Activated CD4-positive, alpha-beta T cell treated with anti-CD3 and anti-CD28 coated beads for 36 hours (primary cell): ENCODE measurements at regions of chr20 and their contacts with region 1.

Region 1: GRCh38 chr20:38033310-38034107 is at the starts of genes RPRD1B and TTI1:
- DNase-seq: peak; percentile 93
- ATAC-seq: peak; percentile 85
- H3K4me3 Mint-ChIP-seq: peak within 1 kb of the TSS; percentile 94
- H3K27ac Mint-ChIP-seq: peak within 1 kb of the TSS; percentile 98
- H3K4me1 Mint-ChIP-seq: peaks cover 65% of the 10 kb centered on the region
- H3K27me3 Mint-ChIP-seq: no peaks in the 10 kb centered on the region
- total RNA-seq, gene RPRD1B: 29.9 to 36.4 TPM
- total RNA-seq, gene TTI1: 35.6 to 36.7 TPM

Region 2: DNA sequence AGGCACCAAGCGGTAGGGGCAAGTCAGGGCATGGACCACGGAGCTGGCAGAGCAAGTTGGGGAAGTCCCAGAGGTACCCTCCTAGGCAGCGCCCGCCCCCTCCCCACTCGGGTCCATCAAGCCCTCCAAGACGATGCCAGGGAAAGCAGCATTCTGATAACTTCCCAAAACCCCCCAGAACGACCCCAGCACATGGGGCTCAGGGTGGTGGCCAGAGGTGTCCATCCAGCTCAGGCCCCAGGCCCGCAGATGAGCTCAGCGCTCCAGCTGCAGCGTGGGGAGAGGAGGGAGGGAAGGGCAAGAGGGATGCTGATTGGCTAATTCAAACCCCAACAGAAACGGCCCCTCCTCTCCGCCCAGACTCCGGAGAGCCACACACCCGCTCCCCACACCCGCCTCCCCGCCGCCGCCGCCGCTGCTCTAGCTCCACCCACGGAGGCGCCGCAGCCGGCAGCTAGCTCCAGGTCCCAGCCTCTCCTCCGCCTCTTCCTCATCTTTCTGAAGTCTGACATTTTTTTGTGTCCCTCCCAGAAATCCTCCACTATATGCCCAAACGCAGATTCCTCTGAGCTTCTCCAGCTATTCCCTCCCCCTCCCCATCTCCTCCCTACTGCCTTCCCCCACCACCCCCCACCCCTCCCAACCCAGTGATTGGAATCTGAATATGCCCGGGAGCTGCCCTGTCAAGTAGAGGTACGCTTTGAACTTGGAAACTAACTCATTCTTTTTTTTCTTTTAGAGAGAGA is 1197.9 kb before region 1 on chr20:
- CTCF ChIA-PET with region 1: no interaction called
- POLR2A ChIA-PET with region 1: no interaction called
- intact Hi-C with region 1: loop called in 1 of 2 experiments (anchors 10 kb)
- DNase-seq: peak; percentile 94
- ATAC-seq: peak; percentile 98
- H3K4me3 Mint-ChIP-seq: peak overlapping the region; percentile 76
- H3K27ac Mint-ChIP-seq: peak overlapping the region; percentile 85
- H3K4me1 Mint-ChIP-seq: peaks cover 13% of the 10 kb centered on the region
- H3K27me3 Mint-ChIP-seq: no peaks in the 10 kb centered on the region

Region 3: GRCh38 chr20:37294262-37294981 is 739.1 kb before region 1 on chr20:
- CTCF ChIA-PET with region 1: no interaction called
- POLR2A ChIA-PET with region 1: no interaction called
- intact Hi-C with region 1: loop called in 1 of 2 experiments (anchors 1 kb)
- DNase-seq: no peak
- ATAC-seq: no peak
- H3K4me3 Mint-ChIP-seq: no peak overlapping the region
- H3K27ac Mint-ChIP-seq: no peak overlapping the region
- H3K4me1 Mint-ChIP-seq: peaks cover 54% of the 10 kb centered on the region
- H3K27me3 Mint-ChIP-seq: no peaks in the 10 kb centered on the region

Region 4: DNA sequence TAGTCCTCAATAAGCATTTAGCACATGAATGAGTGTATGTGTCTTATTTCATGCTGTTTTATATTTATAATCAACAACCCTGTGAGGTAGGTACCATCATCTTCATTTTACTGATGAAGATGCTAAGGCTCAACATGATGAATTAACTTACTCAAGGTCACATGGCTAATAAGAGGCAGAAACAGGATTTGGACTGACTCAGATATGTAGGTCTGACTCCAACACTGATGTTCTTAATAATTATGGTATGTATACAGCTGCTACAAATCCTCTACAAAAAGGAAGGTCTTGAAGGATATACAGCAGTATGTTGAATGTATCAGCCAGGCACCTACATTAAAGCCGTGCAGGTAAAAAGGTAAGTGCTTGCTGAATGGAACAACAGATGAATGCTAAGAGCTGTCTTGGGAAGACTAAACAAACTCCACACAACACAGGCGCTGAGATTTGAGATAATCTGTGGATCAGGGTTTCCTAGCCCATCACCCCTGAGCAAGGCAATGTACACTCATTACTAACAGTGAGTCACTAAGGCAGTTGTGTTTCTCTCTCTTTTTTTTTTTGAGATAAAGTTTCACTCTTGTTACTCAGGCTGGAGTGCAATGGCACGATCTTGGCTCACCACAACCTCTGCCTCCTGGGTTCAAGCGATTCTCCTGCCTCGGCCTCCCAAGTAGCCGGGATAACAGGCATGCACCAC is 32.2 kb before region 1 on chr20:
- CTCF ChIA-PET with region 1: interaction called, 3 read pairs
- POLR2A ChIA-PET with region 1: interaction called, 3 read pairs
- intact Hi-C with region 1: loop called in 1 of 2 experiments (anchors 1 kb)
- DNase-seq: peak; percentile 46
- ATAC-seq: peak; percentile 87
- H3K4me3 Mint-ChIP-seq: no peak overlapping the region
- H3K27ac Mint-ChIP-seq: peak overlapping the region; percentile 41
- H3K4me1 Mint-ChIP-seq: peaks cover 43% of the 10 kb centered on the region
- H3K27me3 Mint-ChIP-seq: no peaks in the 10 kb centered on the region

Region 5: DNA sequence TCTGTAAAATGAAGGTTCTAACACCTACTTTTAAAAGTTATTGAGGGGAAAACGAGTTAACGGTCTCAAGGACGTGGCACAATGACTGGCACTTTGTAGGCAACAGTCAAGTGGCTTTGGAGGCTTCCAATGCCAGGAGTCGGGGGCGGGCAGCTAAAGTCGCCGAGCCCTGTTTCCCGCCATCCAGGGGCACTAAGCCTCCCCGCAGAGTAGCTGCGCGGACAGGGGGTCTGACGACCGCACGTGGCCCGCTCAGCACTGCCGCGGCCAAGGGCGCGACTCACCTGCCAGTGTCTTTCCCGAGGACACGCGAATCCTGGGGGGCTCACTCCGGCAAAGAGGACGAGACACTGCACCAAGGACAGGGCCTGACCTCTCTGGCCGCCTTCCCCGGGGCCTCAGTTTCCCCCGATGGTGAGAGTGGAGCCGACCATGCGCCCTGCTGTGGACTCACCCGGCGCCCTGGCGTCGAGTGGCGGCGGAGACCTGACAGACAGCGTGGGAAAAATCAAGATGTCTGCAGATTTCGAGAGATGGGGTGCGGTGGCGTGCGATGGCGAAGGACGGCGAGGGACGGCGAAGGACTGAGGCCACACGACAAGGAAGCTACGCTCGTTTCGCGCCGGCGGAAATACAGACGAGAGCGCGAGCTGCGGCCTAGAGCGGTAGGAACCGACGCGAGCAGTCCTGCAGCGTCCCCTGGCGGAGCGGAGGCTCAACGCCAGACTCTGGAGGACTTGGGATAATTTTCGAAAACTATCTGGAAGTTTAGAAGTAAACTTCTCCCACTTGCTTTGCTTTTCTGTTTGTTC is 401.4 kb after region 1 on chr20 and contains the start of gene SNHG17:
- CTCF ChIA-PET with region 1: no interaction called
- POLR2A ChIA-PET with region 1: no interaction called
- intact Hi-C with region 1: loop called in 1 of 2 experiments (anchors 1 kb)
- DNase-seq: peak; percentile 94
- ATAC-seq: peak; percentile 84
- H3K4me3 Mint-ChIP-seq: peak within 1 kb of the TSS; percentile 97
- H3K27ac Mint-ChIP-seq: peak within 1 kb of the TSS; percentile 98
- H3K4me1 Mint-ChIP-seq: peaks cover 39% of the 10 kb centered on the region
- H3K27me3 Mint-ChIP-seq: peaks cover 4% of the 10 kb centered on the region
- total RNA-seq, gene SNHG17: 70.7 to 72.4 TPM

Region 6: DNA sequence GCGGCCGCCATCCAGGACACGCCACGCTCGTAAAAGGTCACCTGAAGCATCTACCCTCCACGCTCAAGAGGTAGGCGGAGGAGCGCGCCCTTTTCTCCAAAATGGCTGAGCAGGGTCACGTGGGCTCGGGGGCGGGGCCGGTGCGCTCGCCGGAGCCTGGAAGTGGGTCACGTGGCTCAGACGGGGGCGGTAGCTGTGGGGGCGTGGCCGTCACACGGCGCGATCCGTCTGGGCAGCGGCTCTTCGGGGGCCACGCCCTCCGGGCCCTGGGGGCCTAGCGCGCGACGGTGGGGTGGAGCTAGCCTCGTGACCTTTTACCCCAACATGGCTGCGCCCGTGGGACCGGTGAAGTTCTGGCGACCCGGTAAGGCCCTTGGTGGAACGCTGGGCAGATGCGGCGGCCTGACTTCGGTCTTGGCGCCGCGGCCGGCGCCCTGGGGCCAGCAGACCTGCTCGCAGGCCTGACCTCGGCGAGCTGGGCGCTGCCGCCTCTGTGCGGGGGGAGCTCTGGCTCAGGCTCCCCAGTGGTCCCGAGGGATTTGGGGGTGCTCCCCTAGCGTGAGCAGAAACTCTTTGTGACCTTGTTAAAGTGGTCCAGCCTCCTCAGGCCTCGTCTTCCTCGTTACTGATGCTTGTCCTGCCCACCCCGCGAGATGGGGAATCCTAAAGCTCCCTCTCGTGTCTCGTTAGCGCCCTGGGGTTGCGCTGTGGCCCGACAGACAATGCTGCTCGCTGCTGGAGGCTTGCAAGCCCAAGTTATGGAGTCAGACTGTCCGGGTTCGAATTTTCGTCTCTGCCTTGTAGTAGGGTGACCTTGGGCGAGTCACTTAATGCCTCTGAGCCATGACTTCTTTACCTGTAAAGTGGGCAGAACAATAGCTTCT is 928.8 kb after region 1 on chr20 and contains the start of gene DHX35:
- CTCF ChIA-PET with region 1: no interaction called
- POLR2A ChIA-PET with region 1: no interaction called
- intact Hi-C with region 1: loop called in 1 of 2 experiments (anchors 10 kb)
- DNase-seq: peak; percentile 99
- ATAC-seq: peak; percentile 99
- H3K4me3 Mint-ChIP-seq: peak within 1 kb of the TSS; percentile 94
- H3K27ac Mint-ChIP-seq: peak within 1 kb of the TSS; percentile 95
- H3K4me1 Mint-ChIP-seq: peaks cover 29% of the 10 kb centered on the region
- H3K27me3 Mint-ChIP-seq: no peaks in the 10 kb centered on the region
- total RNA-seq, gene DHX35: 8.7 to 12.0 TPM